ENCODE measurements at regions of chr1 and their contacts with region 1.

Region 1: GRCh38 chr1:85707990-85708828 is at the start of gene ZNHIT6:
- DNase-seq: peak; percentile 98
- ATAC-seq: peak; percentile 96
- H3K4me3 ChIP-seq: peak within 1 kb of the TSS; percentile 90
- H3K27ac ChIP-seq: peak within 1 kb of the TSS; percentile 89
- H3K4me1 ChIP-seq: peaks cover 1% of the 10 kb centered on the region; the same call in 1 of the 2 replicates
- H3K27me3 ChIP-seq: no peaks in the 10 kb centered on the region
- CTCF ChIP-seq: peak; percentile 45
- POLR2A ChIP-seq: peak; percentile 37; the same call in 1 of the 2 replicates
- RAD21 ChIP-seq: peak; percentile 50
- total RNA-seq, gene ZNHIT6: 9.0 and 17.2 TPM in 2 replicates

Region 2: GRCh38 chr1:85576642-85577418 is 131.4 kb before region 1 on chr1:
- CTCF ChIA-PET with region 1: no interaction called
- POLR2A ChIA-PET with region 1: interaction called, 13 read pairs
- dilution Hi-C with region 1: no loop called
- in situ Hi-C with region 1: no loop called
- intact Hi-C with region 1: no loop called
- DNase-seq: peak; percentile 88
- ATAC-seq: peak; percentile 27
- H3K4me3 ChIP-seq: peak overlapping the region; percentile 87
- H3K27ac ChIP-seq: peak overlapping the region; percentile 96
- H3K4me1 ChIP-seq: peaks cover 12% of the 10 kb centered on the region
- H3K27me3 ChIP-seq: no peaks in the 10 kb centered on the region
- CTCF ChIP-seq: peak; percentile 64
- POLR2A ChIP-seq: peak; percentile 41; the same call in 1 of the 2 replicates
- RAD21 ChIP-seq: peak; percentile 39; the same call in 1 of the 2 replicates

Region 3: DNA sequence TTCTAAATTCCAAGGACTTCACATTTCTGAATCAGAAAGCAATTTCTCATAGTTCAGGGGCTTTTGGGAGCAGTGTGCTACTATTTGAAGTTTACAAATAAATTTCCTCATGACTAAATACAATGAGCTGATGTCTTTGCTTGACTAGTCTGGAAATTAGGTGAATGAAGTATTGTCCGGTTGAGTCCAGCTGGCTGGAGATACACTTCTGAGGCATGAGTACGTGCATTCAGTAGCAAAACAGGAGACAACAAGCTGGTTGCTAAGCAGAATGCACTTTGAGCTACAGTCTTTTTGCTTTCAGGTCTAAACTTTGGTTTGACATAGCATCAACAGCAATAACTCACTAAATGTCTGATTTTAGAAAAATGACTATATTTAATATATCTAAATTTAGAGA is 27.1 kb before region 1 on chr1:
- CTCF ChIA-PET with region 1: no interaction called
- POLR2A ChIA-PET with region 1: no interaction called
- dilution Hi-C with region 1: no loop called
- in situ Hi-C with region 1: no loop called
- intact Hi-C with region 1: no loop called
- DNase-seq: peak; percentile 68
- ATAC-seq: peak; percentile 26
- H3K4me3 ChIP-seq: no peak overlapping the region
- H3K27ac ChIP-seq: peak overlapping the region; percentile 40; the same call in 1 of the 2 replicates
- H3K4me1 ChIP-seq: peaks cover 3% of the 10 kb centered on the region; the same call in 1 of the 2 replicates
- H3K27me3 ChIP-seq: no peaks in the 10 kb centered on the region
- CTCF ChIP-seq: no peak
- POLR2A ChIP-seq: no peak
- RAD21 ChIP-seq: no peak

Region 4: GRCh38 chr1:85884372-85885035 is 176.3 kb after region 1 on chr1:
- CTCF ChIA-PET with region 1: interaction called, 3 read pairs
- POLR2A ChIA-PET with region 1: no interaction called
- dilution Hi-C with region 1: no loop called
- in situ Hi-C with region 1: loop called (anchors 25 kb)
- intact Hi-C with region 1: loop called (anchors 1 kb)
- DNase-seq: peak; percentile 48
- ATAC-seq: peak; percentile 98
- H3K4me3 ChIP-seq: no peak overlapping the region
- H3K27ac ChIP-seq: no peak overlapping the region
- H3K4me1 ChIP-seq: no peaks in the 10 kb centered on the region
- H3K27me3 ChIP-seq: no peaks in the 10 kb centered on the region
- CTCF ChIP-seq: peak; percentile 65
- POLR2A ChIP-seq: no peak
- RAD21 ChIP-seq: peak; percentile 56

Region 5: DNA sequence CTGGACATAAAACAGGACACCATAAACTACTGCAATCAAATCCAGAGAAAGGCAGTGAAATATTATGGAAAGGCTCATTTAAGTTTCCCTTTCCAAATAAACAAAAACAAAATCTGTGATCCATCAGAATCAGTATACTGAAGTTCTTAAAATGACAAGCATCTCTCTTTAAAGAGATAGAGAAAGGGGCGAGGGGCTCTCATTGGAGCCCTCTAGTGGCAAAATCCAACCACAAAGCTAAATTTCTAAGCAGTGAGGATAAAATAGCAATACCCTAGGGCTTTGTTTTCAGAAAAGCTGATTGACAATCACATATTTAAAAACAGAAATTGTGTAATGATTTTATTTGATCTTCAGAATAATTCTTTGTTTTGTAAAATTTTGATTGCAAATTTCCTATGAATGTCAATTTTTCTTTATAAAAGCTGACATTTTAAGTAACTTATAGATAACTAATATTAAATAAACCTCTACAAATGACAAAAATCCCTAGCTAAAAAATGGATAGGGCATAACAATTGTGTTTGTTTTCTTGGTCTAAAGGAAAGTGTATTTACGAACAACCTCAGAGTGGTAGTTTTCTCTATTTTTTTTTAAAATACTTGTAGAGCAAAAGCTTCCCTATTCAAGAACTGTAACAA is 310.2 kb after region 1 on chr1:
- CTCF ChIA-PET with region 1: interaction called, 4 read pairs
- POLR2A ChIA-PET with region 1: interaction called, 4 read pairs
- dilution Hi-C with region 1: no loop called
- in situ Hi-C with region 1: no loop called
- intact Hi-C with region 1: loop called (anchors 5 kb)
- DNase-seq: peak; percentile 23
- ATAC-seq: peak; percentile 67; the same call in 1 of the 2 replicates
- H3K4me3 ChIP-seq: no peak overlapping the region
- H3K27ac ChIP-seq: no peak overlapping the region
- H3K4me1 ChIP-seq: no peaks in the 10 kb centered on the region
- H3K27me3 ChIP-seq: no peaks in the 10 kb centered on the region
- CTCF ChIP-seq: peak; percentile 68
- POLR2A ChIP-seq: no peak
- RAD21 ChIP-seq: peak; percentile 62

Region 6: DNA sequence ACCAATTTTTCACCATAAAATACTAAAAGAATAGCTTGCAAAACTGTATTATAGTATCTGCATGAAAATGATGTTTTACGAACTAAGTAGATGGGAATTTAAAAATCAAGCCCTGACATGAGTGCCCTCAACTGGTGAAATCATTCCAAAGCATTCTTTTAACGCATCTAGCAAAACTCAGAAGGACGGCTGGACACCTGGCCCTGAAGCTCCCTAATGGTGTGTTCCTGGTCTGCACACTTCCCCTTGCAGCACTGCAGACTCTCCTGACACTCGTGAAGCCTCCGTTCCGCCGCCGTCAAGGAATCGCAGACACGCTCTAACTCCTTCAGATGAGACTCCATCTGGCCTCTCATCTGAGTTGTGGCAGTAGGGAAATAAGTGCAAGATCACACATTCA is 648.0 kb after region 1 on chr1:
- CTCF ChIA-PET with region 1: interaction called, 5 read pairs
- POLR2A ChIA-PET with region 1: no interaction called
- dilution Hi-C with region 1: no loop called
- in situ Hi-C with region 1: no loop called
- intact Hi-C with region 1: loop called (anchors 10 kb)
- DNase-seq: peak; percentile 10
- ATAC-seq: no peak
- H3K4me3 ChIP-seq: no peak overlapping the region
- H3K27ac ChIP-seq: no peak overlapping the region
- H3K4me1 ChIP-seq: no peaks in the 10 kb centered on the region
- H3K27me3 ChIP-seq: no peaks in the 10 kb centered on the region
- CTCF ChIP-seq: 0 out of 2 replicates have a peak, but pooled peaks have one; percentile 15
- POLR2A ChIP-seq: no peak
- RAD21 ChIP-seq: peak; percentile 42

Region 7: DNA sequence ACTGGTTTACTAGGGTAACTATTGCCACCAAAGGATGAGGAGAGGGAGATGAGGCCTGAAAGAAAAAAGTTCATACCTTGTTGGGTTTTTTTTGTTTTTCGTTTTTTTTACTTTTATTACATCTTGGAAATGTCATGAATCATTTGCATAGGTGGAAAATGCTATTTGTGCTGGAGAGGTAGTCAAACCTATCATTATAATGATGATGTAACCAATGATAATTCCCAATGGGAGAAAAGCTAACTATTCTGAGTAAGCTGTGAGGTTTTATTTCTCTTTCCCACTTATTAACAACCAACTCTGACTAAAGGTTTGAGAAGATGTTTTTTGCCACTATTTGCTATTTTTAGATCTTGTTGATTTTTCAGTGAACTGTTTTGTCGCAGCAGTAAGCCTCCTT is 1025.1 kb after region 1 on chr1:
- CTCF ChIA-PET with region 1: no interaction called
- POLR2A ChIA-PET with region 1: no interaction called
- dilution Hi-C with region 1: no loop called
- in situ Hi-C with region 1: no loop called
- intact Hi-C with region 1: no loop called
- DNase-seq: no peak
- ATAC-seq: no peak
- H3K4me3 ChIP-seq: no peak overlapping the region
- H3K27ac ChIP-seq: no peak overlapping the region
- H3K4me1 ChIP-seq: no peaks in the 10 kb centered on the region
- H3K27me3 ChIP-seq: no peaks in the 10 kb centered on the region
- CTCF ChIP-seq: no peak
- POLR2A ChIP-seq: no peak
- RAD21 ChIP-seq: no peak